ENCODE measurements at regions of chr5 and their contacts with region 1.

Region 1: DNA sequence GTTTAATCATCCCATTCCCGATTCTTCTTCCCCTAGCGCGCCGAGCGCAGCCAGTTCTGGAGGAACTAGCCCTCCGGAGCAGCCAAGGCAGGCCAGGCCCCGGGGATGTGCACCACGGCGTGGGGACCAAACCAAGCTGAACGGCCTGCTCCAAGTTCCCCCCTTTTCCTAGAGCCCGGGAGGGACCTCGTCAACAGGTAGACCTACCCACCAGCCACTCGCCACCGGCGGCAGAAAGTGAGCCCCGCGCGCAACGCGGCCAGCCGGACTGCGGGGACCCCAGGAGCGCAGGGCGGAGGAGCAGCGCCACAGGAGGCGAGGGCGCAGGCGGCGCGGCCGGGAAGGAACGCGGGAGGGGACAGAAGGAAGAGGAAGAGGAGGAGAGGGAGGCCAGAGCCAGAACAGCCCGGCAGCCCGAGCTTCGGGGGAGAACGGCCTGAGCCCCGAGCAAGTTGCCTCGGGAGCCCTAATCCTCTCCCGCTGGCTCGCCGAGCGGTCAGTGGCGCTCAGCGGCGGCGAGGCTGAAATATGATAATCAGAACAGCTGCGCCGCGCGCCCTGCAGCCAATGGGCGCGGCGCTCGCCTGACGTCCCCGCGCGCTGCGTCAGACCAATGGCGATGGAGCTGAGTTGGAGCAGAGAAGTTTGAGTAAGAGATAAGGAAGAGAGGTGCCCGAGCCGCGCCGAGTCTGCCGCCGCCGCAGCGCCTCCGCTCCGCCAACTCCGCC is at the start of gene ISL1:
- DNase-seq: no peak
- H3K4me3 Mint-ChIP-seq: peak within 1 kb of the TSS; percentile 57
- H3K27ac Mint-ChIP-seq: peak within 1 kb of the TSS; percentile 56
- H3K4me1 Mint-ChIP-seq: peaks cover 4% of the 10 kb centered on the region
- H3K27me3 Mint-ChIP-seq: peaks cover 96% of the 10 kb centered on the region
- total RNA-seq, gene ISL1: not detected in 2 replicates

Region 2: GRCh38 chr5:51271261-51271660 is 111.7 kb before region 1 on chr5:
- intact Hi-C with region 1: no loop called
- DNase-seq: no peak
- H3K4me3 Mint-ChIP-seq: no peak overlapping the region
- H3K27ac Mint-ChIP-seq: no peak overlapping the region
- H3K4me1 Mint-ChIP-seq: no peaks in the 10 kb centered on the region
- H3K27me3 Mint-ChIP-seq: no peaks in the 10 kb centered on the region

Region 3: GRCh38 chr5:51371052-51371451 is 11.9 kb before region 1 on chr5:
- intact Hi-C with region 1: no loop called
- DNase-seq: no peak
- H3K4me3 Mint-ChIP-seq: no peak overlapping the region
- H3K27ac Mint-ChIP-seq: no peak overlapping the region
- H3K4me1 Mint-ChIP-seq: no peaks in the 10 kb centered on the region
- H3K27me3 Mint-ChIP-seq: peaks cover 4% of the 10 kb centered on the region

Region 4: DNA sequence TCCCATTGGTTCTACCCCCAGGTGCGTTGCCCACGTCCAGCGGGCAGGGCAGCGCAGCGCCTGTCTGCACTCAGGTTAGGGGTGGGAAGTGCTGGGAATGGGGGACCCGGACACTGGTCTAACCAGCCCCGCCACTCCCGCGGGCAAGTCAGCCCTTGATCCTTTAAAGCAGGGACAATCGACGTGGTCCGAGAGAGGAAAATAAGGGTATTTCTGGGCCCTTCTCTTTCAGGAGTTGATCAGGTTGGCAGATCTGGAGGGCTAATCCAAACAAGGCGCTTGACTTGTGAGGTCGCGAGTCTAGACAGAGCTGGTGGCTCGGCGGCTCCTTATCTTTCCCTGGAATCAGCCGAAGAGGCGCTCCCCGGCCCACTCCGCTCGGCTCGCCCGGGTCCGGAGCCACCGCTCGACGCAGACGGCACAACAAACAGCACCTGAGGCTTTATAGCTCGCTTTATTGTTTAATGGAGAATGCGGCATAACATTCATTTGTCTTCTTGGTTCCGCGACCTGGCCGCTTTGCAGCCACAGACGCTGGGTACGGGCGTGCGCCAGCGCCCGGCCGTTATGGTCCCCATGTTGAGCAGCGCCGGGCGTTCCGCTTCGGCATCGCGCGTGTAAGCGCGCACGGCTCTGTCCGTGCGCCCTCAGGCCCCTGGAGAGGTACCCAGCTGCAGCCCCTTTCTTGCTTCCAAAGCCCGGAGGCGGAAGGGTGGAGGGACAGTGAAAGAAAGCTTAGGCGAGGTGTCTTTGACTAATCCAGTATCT is 16.1 kb after region 1 on chr5:
- intact Hi-C with region 1: loop called (anchors 2 kb)
- DNase-seq: no peak
- H3K4me3 Mint-ChIP-seq: no peak overlapping the region
- H3K27ac Mint-ChIP-seq: no peak overlapping the region
- H3K4me1 Mint-ChIP-seq: no peaks in the 10 kb centered on the region
- H3K27me3 Mint-ChIP-seq: peaks cover 50% of the 10 kb centered on the region

Region 5: DNA sequence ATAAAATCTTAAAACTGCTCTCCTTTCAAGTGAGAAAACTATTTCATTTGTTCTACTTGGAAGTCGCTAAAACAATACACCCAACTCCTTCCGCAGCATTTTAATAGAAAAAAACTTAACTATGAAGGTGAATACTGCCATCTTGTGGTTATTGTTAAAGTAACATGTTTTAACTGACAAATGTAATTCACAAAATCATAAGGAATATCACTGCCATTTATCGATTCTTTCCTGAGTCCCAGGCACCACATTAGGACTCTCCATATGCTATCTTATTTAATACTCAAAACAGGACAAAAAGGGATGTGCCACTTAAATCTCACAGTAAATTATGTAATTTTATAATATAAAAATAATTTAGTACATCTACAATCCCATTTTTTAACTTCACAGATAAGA is 1274.3 kb after region 1 on chr5:
- intact Hi-C with region 1: loop called (anchors 5 kb)
- DNase-seq: no peak
- H3K4me3 Mint-ChIP-seq: no peak overlapping the region
- H3K27ac Mint-ChIP-seq: no peak overlapping the region
- H3K4me1 Mint-ChIP-seq: no peaks in the 10 kb centered on the region
- H3K27me3 Mint-ChIP-seq: peaks cover 34% of the 10 kb centered on the region

Measured in activated CD4-positive, alpha-beta T cell treated with anti-CD3 and anti-CD28 coated beads, Interleukin-2, amount 10 ng/mL, durations not matched to agents 24 days and 14 days (primary cell).